Cardiac septum (tissue), 1 donor: ENCODE measurements at regions of chr6 and their contacts with region 1.

Region 1: GRCh38 chr6:108260809-108261569 is at the start of gene SNX3:
- DNase-seq: peak; percentile 97
- total RNA-seq, gene SNX3: 220 TPM

Region 2: GRCh38 chr6:108074359-108075144 is 186.4 kb before region 1 on chr6 and contains the start of gene OSTM1:
- intact Hi-C with region 1: loop called (anchors 1 kb)
- DNase-seq: peak; percentile 95
- total RNA-seq, gene OSTM1: 53.4 TPM

Region 3: GRCh38 chr6:108294727-108295625 is 34.0 kb after region 1 on chr6 and contains the start of gene AFG1L:
- intact Hi-C with region 1: loop called (anchors 2 kb)
- DNase-seq: peak; percentile 98
- total RNA-seq, gene AFG1L: 11.9 TPM